ENCODE measurements at regions of chr11 and their contacts with region 1.

Region 1: GRCh38 chr11:62694455-62695167 is 5.3 kb upstream of the LRRN4CL start:
- DNase-seq: peak; percentile 65 to 89 (median 74)
- ATAC-seq: peak; percentile 93
- H3K4me3 ChIP-seq: no peak overlapping the region
- H3K4me3 Mint-ChIP-seq: no peak overlapping the region
- H3K27ac ChIP-seq: no peak overlapping the region
- H3K27ac Mint-ChIP-seq: no peak overlapping the region
- H3K4me1 ChIP-seq: peaks cover 4% of the 10 kb centered on the region
- H3K4me1 Mint-ChIP-seq: peaks cover 7% of the 10 kb centered on the region
- H3K27me3 ChIP-seq: no peaks in the 10 kb centered on the region
- H3K27me3 Mint-ChIP-seq: no peaks in the 10 kb centered on the region
- CTCF ChIP-seq: peak; percentile 89

Region 2: DNA sequence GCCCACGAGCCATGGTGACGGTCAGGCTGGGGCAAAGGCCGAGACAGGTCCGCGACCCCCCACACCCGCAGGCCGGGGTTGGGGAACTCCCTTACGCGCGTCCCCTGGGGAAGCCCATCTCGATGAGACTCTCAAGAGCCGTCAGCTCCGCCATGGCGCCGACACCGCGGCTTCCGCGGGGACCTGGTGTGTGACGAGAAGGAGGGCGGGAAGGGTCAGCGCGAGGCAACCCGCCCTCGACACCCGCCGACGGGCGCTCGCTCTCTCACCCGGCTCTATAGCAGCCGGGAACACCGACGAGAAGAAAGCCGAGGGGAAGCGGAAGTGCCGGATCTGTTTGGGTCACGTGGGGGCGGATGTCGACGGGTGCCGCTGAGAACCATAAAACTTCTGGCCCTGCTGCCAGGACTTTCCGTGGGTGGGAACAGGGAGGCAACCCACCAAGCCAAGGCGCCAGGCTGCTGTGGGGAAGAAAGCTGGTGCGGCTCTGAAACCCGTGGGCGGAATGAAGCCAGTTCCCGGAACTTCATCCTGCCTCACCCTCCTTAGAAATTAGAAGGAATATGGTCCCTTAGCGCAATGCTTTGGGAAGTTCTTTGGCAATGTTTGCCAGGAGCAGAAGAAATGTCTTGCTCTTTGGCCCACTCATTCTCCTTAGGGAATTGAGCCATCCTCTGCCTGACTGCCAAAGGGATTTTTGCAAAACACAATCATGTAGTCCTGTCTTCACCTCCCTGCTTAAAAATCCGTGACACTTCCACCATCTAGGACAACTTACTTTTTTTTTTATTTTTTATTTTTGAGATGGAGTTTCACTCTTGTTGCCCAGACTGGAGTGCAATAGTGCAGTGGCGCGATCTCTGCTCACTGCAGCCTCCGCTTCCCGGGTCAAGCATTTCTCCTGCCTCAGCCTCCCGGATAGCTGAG is 15.6 kb before region 1 on chr11 and contains the start of gene UBXN1:
- CTCF ChIA-PET with region 1: interaction called, 12 read pairs
- POLR2A ChIA-PET with region 1: no interaction called
- intact Hi-C with region 1: no loop called
- DNase-seq: peak; percentile 68 to 93 (median 76)
- ATAC-seq: peak; percentile 84
- H3K4me3 ChIP-seq: peak within 1 kb of the TSS; percentile 100
- H3K4me3 Mint-ChIP-seq: peak within 1 kb of the TSS; percentile 91
- H3K27ac ChIP-seq: peak within 1 kb of the TSS; percentile 97
- H3K27ac Mint-ChIP-seq: peak within 1 kb of the TSS; percentile 87
- H3K4me1 ChIP-seq: peaks cover 33% of the 10 kb centered on the region
- H3K4me1 Mint-ChIP-seq: peaks cover 46% of the 10 kb centered on the region
- H3K27me3 ChIP-seq: no peaks in the 10 kb centered on the region
- H3K27me3 Mint-ChIP-seq: no peaks in the 10 kb centered on the region
- CTCF ChIP-seq: no peak
- total RNA-seq, gene UBXN1: 196 to 222 TPM

Region 3: GRCh38 chr11:62787005-62787759 is 92.6 kb after region 1 on chr11 and contains the start of gene TMEM179B:
- CTCF ChIA-PET with region 1: no interaction called
- POLR2A ChIA-PET with region 1: no interaction called
- intact Hi-C with region 1: no loop called
- DNase-seq: peak; percentile 90 to 99 (median 97)
- ATAC-seq: peak; percentile 61
- H3K4me3 ChIP-seq: peak within 1 kb of the TSS; percentile 77
- H3K4me3 Mint-ChIP-seq: peak within 1 kb of the TSS; percentile 98
- H3K27ac ChIP-seq: peak within 1 kb of the TSS; percentile 80 to 92
- H3K27ac Mint-ChIP-seq: peak within 1 kb of the TSS; percentile 98
- H3K4me1 ChIP-seq: peaks cover 53% of the 10 kb centered on the region
- H3K4me1 Mint-ChIP-seq: peaks cover 55% of the 10 kb centered on the region
- H3K27me3 ChIP-seq: no peaks in the 10 kb centered on the region
- H3K27me3 Mint-ChIP-seq: no peaks in the 10 kb centered on the region
- CTCF ChIP-seq: no peak
- total RNA-seq, gene TMEM179B: 34.7 to 37.4 TPM

Measured in CD4-positive, alpha-beta T cell (primary cell).